ENCODE measurements at regions of chr2 and their contacts with region 1.

Region 1: GRCh38 chr2:231557571-231558237 is 27.5 kb upstream of the NMUR1 start:
- DNase-seq: peak; percentile 90 to 94 (median 92)
- H3K4me3 ChIP-seq: no peak overlapping the region
- H3K27ac ChIP-seq: no peak overlapping the region
- H3K4me1 ChIP-seq: peaks cover 7 to 37% (median 25%) of the 10 kb centered on the region in 4 experiments
- H3K27me3 ChIP-seq: no peaks in the 10 kb centered on the region

Region 2: DNA sequence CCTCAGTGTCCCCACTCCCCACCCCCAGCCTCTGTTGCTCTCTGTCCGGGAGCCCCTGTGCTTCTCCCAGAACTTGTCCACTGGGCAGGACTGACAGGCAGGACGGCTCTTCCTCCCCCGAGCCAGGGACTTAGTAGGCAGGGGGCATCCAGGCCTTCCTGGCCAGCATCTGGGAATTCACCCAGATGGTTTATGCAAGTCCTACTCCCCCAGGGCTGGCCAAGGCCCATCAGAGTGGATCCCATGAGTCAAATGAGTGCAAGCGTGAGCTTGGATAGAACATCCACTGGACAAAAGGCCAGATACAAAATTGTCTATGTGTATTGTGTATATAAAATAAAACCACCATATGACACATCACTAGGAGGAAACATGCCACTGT is 34.9 kb before region 1 on chr2:
- CTCF ChIA-PET with region 1: interaction called, 69 read pairs
- POLR2A ChIA-PET with region 1: interaction called, 5 read pairs
- DNase-seq: no peak
- H3K4me3 ChIP-seq: no peak overlapping the region
- H3K27ac ChIP-seq: no peak overlapping the region
- H3K4me1 ChIP-seq: peaks cover 2 to 44% (median 19%) of the 10 kb centered on the region in 4 experiments
- H3K27me3 ChIP-seq: peaks cover 0 to 15% (median 0%) of the 10 kb centered on the region in 5 experiments

Region 3: GRCh38 chr2:231685349-231686191 is 127.9 kb after region 1 on chr2:
- CTCF ChIA-PET with region 1: no interaction called
- POLR2A ChIA-PET with region 1: no interaction called
- DNase-seq: no peak
- H3K4me3 ChIP-seq: no peak overlapping the region
- H3K27ac ChIP-seq: no peak overlapping the region
- H3K4me1 ChIP-seq: peaks cover 0 to 46% (median 36%) of the 10 kb centered on the region in 4 experiments
- H3K27me3 ChIP-seq: no peaks in the 10 kb centered on the region